Gastrocnemius medialis (tissue), 4 donors: ENCODE measurements at regions of chr12 and their contacts with region 1.

Region 1: DNA sequence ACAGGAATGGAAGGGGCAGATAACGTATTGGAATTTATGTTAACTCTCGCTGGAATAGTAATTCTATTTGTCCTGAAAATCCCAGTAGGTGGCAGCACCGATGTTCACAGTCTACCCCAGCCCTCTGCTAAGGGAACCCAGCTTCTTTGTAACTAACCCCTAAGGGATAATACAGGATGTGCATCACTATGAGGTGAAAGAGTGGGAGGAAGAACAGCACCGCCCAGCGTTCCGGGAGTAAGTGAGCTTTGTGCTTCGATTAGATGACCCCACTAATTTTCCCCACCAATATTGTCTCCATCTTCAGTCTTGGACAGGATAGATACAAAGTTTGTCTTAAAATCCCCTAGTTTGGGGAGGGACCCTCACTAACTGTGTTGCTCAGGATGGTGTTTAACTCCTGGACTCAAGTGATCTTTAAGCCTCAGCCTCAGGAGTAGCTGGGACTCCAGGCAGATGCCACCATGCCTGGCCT is 2.7 kb downstream of the SLC2A3 start:
- DNase-seq: peak; percentile 53 to 63
- ATAC-seq: peak; percentile 82
- H3K4me3 ChIP-seq: peak overlapping the region; percentile 55 to 73 (median 62)
- H3K27ac ChIP-seq: peak overlapping the region; percentile 78 to 88 (median 84)
- H3K4me1 ChIP-seq: peaks cover 0 to 10% of the 10 kb centered on the region in 2 donors
- H3K27me3 ChIP-seq: peaks cover 0 to 6% (median 0%) of the 10 kb centered on the region in 3 donors
- CTCF ChIP-seq: peak; percentile 34 to 54 (median 47)
- POLR2A ChIP-seq: peak; percentile 36 to 63

Region 2: GRCh38 chr12:7907009-7907408 is 26.3 kb before region 1 on chr12:
- in situ Hi-C with region 1: no loop called
- intact Hi-C with region 1: no loop called
- DNase-seq: no peak
- ATAC-seq: no peak
- H3K4me3 ChIP-seq: no peak overlapping the region
- H3K27ac ChIP-seq: no peak overlapping the region
- H3K4me1 ChIP-seq: no peaks in the 10 kb centered on the region
- H3K27me3 ChIP-seq: no peaks in the 10 kb centered on the region
- CTCF ChIP-seq: no peak
- POLR2A ChIP-seq: no peak

Region 3: GRCh38 chr12:7970475-7971252 is 37.4 kb after region 1 on chr12:
- in situ Hi-C with region 1: no loop called
- intact Hi-C with region 1: loop called (anchors 5 kb)
- DNase-seq: peak; percentile 57 to 64
- ATAC-seq: peak; percentile 82 to 83
- H3K4me3 ChIP-seq: peak overlapping the region; percentile 40 to 65 (median 56)
- H3K27ac ChIP-seq: peak overlapping the region; percentile 69 to 83 (median 77)
- H3K4me1 ChIP-seq: peaks cover 7 to 10% of the 10 kb centered on the region in 2 donors
- H3K27me3 ChIP-seq: peaks cover 11 to 32% (median 22%) of the 10 kb centered on the region in 3 donors
- CTCF ChIP-seq: peak in 1 of 5 experiments; percentile 9
- POLR2A ChIP-seq: peak; percentile 59 to 79

Region 4: DNA sequence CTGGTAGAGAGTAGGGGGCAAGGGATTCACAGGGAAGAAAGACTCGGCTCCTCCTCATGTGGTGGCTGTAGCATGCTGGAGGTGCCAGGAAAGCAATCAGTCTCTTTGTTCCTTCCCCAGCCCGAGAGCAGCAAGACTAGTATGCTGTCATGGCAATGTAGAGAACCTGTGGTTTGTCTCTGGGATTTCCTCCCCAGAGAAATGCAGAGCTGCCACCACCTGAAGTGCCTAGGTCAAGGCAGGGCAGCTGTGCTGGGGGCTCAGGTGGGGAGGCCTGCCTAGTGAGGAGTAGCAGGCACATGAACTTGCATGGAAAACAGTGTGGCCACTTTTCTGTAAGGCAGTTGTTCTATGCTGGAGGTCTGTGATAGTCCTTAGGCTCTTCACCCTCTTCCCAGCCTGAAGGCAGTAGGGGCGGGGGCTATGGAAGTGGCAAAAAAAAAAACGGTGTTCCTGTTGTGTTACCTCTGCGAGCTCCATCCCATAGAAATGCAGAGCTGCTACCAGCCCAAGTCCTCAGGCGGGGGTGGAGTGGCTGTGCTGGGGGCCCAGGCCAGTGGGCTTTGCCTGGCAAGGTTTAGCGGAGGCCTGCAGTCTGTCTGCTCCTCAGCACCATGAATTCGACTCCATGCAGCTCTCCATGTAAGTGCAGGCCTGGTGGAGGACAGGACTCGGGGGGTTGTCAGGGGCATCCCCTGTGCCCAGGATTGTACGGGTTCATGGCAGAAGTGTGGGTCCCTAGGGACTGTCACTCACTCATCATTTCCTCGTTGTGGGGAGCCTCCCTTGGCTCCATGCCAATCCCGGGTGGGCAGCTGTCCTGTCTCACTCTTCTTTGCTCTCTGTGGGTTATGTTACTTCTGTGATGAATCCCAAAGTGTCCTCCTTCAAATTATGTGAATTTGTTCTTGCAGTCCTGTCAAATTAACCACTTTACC is 575.9 kb after region 1 on chr12:
- in situ Hi-C with region 1: no loop called
- intact Hi-C with region 1: no loop called
- DNase-seq: no peak
- ATAC-seq: no peak
- H3K4me3 ChIP-seq: no peak overlapping the region
- H3K27ac ChIP-seq: no peak overlapping the region
- H3K4me1 ChIP-seq: no peaks in the 10 kb centered on the region
- H3K27me3 ChIP-seq: no peaks in the 10 kb centered on the region
- CTCF ChIP-seq: no peak
- POLR2A ChIP-seq: no peak